ENCODE measurements at regions of chr2 and their contacts with region 1.

Region 1: DNA sequence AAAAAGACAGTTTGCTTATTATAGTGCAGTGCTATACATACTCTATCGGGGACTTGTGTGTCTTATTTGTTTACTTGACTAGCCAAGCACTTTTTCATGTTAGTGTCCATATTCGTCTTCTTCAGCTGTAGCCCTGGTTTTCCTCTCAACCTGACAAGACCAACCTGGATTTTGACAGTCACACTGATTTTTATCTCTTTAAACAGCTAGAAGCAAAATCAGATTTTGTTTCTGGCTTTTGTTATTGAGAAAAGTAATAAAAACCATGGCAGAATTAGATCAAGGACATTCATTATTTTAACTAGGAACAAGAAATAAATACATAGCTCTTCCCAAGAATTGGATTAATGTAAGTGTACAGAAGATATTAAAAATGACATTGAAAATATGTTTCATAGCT is 56.8 kb downstream of the SPATS2L start:
- DNase-seq: no peak
- H3K4me3 ChIP-seq: no peak overlapping the region
- H3K27ac ChIP-seq: no peak overlapping the region
- H3K4me1 ChIP-seq: peaks cover 6 to 31% (median 19%) of the 10 kb centered on the region in 4 experiments; a peak in 5 of 7 replicates
- H3K27me3 ChIP-seq: no peaks in the 10 kb centered on the region
- CTCF ChIP-seq: no peak
- EP300 ChIP-seq: no peak
- POLR2A ChIP-seq: no peak
- RAD21 ChIP-seq: no peak

Region 2: GRCh38 chr2:200321780-200322534 is 41.3 kb before region 1 on chr2:
- CTCF ChIA-PET with region 1: no interaction called
- POLR2A ChIA-PET with region 1: no interaction called
- DNase-seq: no peak
- H3K4me3 ChIP-seq: no peak overlapping the region
- H3K27ac ChIP-seq: no peak overlapping the region
- H3K4me1 ChIP-seq: peaks cover 2 to 39% (median 30%) of the 10 kb centered on the region in 4 experiments
- H3K27me3 ChIP-seq: no peaks in the 10 kb centered on the region
- CTCF ChIP-seq: no peak
- EP300 ChIP-seq: no peak
- POLR2A ChIP-seq: no peak
- RAD21 ChIP-seq: no peak

Region 3: GRCh38 chr2:200373973-200374416 is 10.7 kb after region 1 on chr2:
- CTCF ChIA-PET with region 1: interaction called, 10 read pairs
- POLR2A ChIA-PET with region 1: interaction called, 6 read pairs
- DNase-seq: no peak
- H3K4me3 ChIP-seq: no peak overlapping the region
- H3K27ac ChIP-seq: no peak overlapping the region
- H3K4me1 ChIP-seq: peaks cover 7 to 21% (median 16%) of the 10 kb centered on the region in 4 experiments
- H3K27me3 ChIP-seq: no peaks in the 10 kb centered on the region
- CTCF ChIP-seq: no peak
- EP300 ChIP-seq: no peak
- POLR2A ChIP-seq: no peak
- RAD21 ChIP-seq: no peak